ENCODE measurements at regions of chr21 and their contacts with region 1.

Region 1: GRCh38 chr21:33924079-33924765 is 8.6 kb upstream of the ATP5PO start:
- DNase-seq: peak; percentile 71 to 91
- H3K4me3 ChIP-seq: no peak overlapping the region
- H3K27ac ChIP-seq: peak overlapping the region in 1 of 2 donors; percentile 15
- H3K4me1 ChIP-seq: peaks cover 0 to 11% of the 10 kb centered on the region in 2 donors
- H3K27me3 ChIP-seq: no peaks in the 10 kb centered on the region
- CTCF ChIP-seq: peak; percentile 80 to 92 (median 91)
- POLR2A ChIP-seq: no peak

Region 2: DNA sequence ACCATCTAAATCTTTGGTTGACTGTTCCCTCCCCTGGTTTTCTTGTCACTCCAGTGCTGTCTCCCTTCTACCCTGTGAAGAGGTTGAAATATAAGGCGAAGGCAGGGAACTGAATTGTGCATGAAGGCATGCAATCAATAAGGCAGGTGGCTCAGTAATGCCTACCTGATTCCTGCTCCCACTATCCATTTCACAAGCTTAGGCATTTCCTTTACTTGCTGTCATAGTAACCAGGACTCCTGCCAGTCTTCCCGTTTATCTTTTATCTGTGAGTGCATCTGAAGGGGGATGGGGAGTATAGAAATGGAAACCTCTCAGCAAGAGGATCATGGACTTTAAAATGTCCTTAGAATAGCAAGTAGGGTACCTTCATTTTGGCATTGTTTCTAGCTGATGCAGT is 189.6 kb after region 1 on chr21:
- intact Hi-C with region 1: no loop called
- DNase-seq: no peak
- H3K4me3 ChIP-seq: no peak overlapping the region
- H3K27ac ChIP-seq: no peak overlapping the region
- H3K4me1 ChIP-seq: no peaks in the 10 kb centered on the region
- H3K27me3 ChIP-seq: no peaks in the 10 kb centered on the region
- CTCF ChIP-seq: no peak
- POLR2A ChIP-seq: no peak

Region 3: DNA sequence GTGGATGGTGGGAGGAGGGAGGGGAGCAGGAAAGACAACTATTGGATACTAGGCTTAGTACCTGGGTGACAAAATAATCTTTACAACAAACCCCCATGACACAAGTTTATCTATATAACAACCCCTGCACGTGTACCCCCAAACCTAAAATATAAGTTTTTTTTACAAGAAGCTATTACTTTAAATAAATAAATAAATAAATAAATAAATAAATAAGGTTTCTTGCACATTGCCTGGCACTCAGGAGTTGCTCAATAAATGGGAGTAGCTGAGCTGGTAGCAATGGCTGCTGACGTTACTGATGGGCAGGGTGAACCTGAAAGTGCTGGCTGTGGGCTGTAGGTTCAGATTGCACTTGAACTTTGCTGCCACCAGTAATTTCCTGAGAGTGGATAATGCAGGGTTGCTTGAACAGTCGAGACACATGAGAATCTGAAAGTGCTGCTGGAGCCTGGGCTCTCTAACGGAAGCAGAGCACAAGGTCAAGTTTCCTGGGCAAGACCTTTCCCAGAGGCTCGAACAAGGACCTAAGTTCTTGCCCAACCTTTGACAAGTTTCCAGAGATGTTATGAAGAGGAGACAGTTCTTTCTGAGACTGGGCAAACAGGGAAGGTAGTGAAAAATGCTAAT is 424.8 kb after region 1 on chr21:
- intact Hi-C with region 1: loop called (anchors 2 kb)
- DNase-seq: no peak
- H3K4me3 ChIP-seq: no peak overlapping the region
- H3K27ac ChIP-seq: no peak overlapping the region
- H3K4me1 ChIP-seq: no peaks in the 10 kb centered on the region
- H3K27me3 ChIP-seq: no peaks in the 10 kb centered on the region
- CTCF ChIP-seq: no peak
- POLR2A ChIP-seq: no peak